Breast epithelium (tissue), 4 donors: ENCODE measurements at regions of chr5 and their contacts with region 1.

Region 1: GRCh38 chr5:140151730-140152597 is 23.0 kb upstream of the CYSTM1 start:
- DNase-seq: no peak
- H3K4me3 ChIP-seq: no peak overlapping the region
- H3K27ac ChIP-seq: peak overlapping the region; percentile 22 to 53
- H3K4me1 ChIP-seq: peaks cover 0 to 14% of the 10 kb centered on the region in 2 donors
- H3K27me3 ChIP-seq: no peaks in the 10 kb centered on the region
- CTCF ChIP-seq: no peak
- POLR2A ChIP-seq: no peak

Region 2: GRCh38 chr5:140075371-140075770 is 76.6 kb before region 1 on chr5:
- intact Hi-C with region 1: loop called (anchors 5 kb)
- DNase-seq: no peak
- H3K4me3 ChIP-seq: no peak overlapping the region
- H3K27ac ChIP-seq: no peak overlapping the region
- H3K4me1 ChIP-seq: no peaks in the 10 kb centered on the region
- H3K27me3 ChIP-seq: no peaks in the 10 kb centered on the region
- CTCF ChIP-seq: no peak
- POLR2A ChIP-seq: no peak

Region 3: DNA sequence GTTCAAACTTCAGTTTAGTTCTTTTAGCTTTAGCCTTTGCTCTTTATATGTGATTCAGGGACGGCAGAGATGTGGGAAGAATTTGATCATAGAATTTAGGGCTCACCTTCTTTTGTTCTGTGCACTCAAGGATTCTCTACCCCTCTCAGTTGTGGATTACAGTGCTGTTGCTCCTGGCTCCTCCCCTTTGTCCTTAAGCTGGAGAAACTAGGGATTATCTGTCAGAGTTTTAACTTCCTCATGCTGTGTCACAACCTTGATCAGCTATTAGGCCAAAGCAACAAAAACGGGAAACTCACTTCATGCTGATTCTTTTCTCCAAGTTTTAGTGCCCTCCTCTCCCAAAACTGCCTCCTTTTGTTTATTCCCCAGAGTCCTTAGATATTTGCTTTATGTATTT is 801.3 kb after region 1 on chr5:
- intact Hi-C with region 1: no loop called
- DNase-seq: no peak
- H3K4me3 ChIP-seq: no peak overlapping the region
- H3K27ac ChIP-seq: no peak overlapping the region
- H3K4me1 ChIP-seq: no peaks in the 10 kb centered on the region
- H3K27me3 ChIP-seq: no peaks in the 10 kb centered on the region
- CTCF ChIP-seq: no peak
- POLR2A ChIP-seq: no peak